Cardiac septum (tissue), 1 donor: ENCODE measurements at regions of chr7 and their contacts with region 1.

Region 1: DNA sequence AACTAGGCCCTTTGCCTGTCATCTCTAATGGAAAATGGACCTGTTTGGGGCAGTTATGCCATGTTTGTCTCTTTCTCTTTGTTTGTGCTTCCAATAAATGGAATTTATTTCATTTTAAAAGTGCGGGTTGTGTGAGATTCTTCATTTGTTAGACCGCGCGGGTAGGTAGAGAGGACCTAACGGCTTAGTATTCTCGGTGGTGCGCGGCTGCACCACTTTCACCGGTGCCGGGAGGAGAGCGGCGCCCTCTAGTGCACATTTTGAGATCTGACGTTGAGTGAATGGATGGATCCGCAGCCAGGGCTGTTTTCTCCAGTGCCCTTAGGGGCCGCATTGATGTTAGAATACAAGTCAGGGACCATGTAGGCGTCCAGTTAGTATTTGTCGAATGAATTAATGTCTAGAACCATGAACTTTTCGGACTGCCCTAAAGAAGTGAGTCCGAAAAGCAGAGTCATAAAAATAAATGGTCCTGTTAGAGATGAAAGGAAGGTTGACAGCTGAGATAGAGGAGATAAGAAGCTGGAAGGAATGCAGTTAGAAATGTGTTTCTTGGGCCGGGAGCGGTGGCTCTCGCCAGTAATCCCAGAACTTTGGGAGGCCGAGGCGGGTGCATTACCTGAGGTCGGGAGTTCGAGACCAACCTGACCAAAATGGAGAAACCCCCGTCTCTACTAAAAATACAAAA is 29.3 kb upstream of the GIMAP8 start:
- DNase-seq: peak; percentile 89

Region 2: GRCh38 chr7:150356265-150356897 is 64.8 kb before region 1 on chr7:
- intact Hi-C with region 1: loop called (anchors 5 kb)
- DNase-seq: no peak

Region 3: DNA sequence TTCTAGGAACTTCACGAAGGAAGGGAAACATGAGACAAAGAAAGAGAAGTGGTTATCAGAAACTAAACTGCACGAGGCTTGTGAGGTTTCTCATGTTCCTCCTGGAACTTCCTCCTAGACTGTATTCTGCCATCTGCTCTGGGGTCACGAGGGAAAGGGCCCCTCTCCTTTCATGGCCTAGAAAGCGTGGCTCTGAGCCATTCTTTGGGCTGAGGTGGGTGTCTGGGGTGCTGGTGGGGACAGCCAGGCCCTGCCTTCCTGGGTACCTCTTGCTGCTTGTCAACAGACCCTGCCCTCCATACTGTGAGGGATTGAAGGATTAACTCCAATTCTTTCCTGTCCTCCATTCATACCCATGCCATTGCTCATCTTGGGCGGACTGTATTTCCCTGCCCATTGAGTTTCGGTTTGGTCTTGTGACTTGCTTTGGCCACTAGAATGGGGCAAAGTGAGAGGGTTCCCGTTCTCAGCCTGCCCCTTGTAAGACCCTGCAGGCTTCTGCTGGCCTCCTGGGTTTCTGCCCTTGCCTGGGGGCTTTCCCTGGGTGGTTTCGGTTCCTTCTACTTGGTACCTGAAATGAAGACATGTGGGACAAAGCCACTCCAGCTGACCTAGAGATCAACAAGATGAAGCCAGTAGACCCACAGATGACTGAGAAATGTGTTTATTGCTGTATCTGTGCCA is 14.4 kb after region 1 on chr7:
- intact Hi-C with region 1: no loop called
- DNase-seq: no peak

Region 4: GRCh38 chr7:150657526-150657925 is 236.4 kb after region 1 on chr7:
- intact Hi-C with region 1: no loop called
- DNase-seq: no peak